Sigmoid colon (tissue), 7 donors: ENCODE measurements at regions of chr5 and their contacts with region 1.

Region 1: GRCh38 chr5:40679914-40680681 is at the start of gene PTGER4:
- DNase-seq: peak; percentile 68
- H3K4me3 ChIP-seq: peak within 1 kb of the TSS; percentile 61 to 84 (median 78)
- H3K27ac ChIP-seq: peak within 1 kb of the TSS; percentile 85 to 93 (median 90)
- H3K4me1 ChIP-seq: peaks cover 0 to 62% (median 28%) of the 10 kb centered on the region in 4 donors
- H3K27me3 ChIP-seq: no peaks in the 10 kb centered on the region
- CTCF ChIP-seq: no peak
- EP300 ChIP-seq: no peak
- POLR2A ChIP-seq: peak; percentile 89 to 93
- total RNA-seq, gene PTGER4: 44.3 to 77.7 (median 72.8) TPM

Region 2: GRCh38 chr5:39948867-39949468 is 731.1 kb before region 1 on chr5:
- intact Hi-C with region 1: loop called (anchors 2 kb)
- DNase-seq: peak; percentile 68
- H3K4me3 ChIP-seq: no peak overlapping the region
- H3K27ac ChIP-seq: no peak overlapping the region
- H3K4me1 ChIP-seq: no peaks in the 10 kb centered on the region
- H3K27me3 ChIP-seq: no peaks in the 10 kb centered on the region
- CTCF ChIP-seq: peak; percentile 27 to 67 (median 44)
- EP300 ChIP-seq: no peak
- POLR2A ChIP-seq: no peak

Region 3: DNA sequence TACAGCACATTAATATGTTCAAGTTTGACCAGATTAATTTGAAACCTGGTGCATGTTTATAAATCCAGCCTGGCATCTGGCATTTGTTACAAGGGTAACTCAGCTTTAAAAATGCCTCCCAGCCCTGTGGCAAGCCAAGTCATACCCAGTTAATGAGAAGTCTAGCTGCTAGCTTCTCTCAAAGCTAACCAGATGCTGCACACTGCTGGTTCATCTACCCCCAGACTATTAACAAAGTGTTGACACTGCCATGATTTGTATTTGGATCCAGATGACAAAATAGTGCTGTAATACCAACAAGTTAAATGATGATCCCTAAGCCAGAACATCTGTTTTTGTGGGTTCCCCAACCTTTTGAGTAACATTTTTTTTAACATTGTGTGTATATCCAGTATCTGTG is 681.6 kb before region 1 on chr5:
- intact Hi-C with region 1: loop called (anchors 2 kb)
- DNase-seq: peak; percentile 86
- H3K4me3 ChIP-seq: no peak overlapping the region
- H3K27ac ChIP-seq: peak overlapping the region in 3 of 4 donors; percentile 57 to 79 (median 68)
- H3K4me1 ChIP-seq: peaks cover 0 to 31% (median 14%) of the 10 kb centered on the region in 4 donors
- H3K27me3 ChIP-seq: no peaks in the 10 kb centered on the region
- CTCF ChIP-seq: no peak
- EP300 ChIP-seq: peak in 3 of 4 donors; percentile 15 to 90 (median 77)
- POLR2A ChIP-seq: no peak

Region 4: DNA sequence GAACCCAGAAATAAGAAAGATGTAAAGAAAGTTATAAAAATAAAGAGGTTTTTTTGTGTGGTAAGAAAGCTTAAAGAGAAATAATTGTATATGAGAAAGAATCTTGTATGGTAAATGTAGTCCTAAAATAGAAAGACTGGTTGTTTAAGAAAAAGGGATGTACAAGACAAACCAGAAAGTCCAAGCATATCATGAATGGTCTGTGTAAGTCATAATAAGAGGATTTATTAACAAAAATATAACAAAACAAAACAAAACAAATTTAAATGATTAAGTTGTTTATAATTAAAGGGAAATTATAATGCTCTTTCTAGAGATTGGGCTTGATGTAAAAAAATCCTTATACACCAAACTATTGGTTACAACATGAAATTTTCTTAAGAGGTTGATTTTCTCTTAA is 590.8 kb before region 1 on chr5:
- intact Hi-C with region 1: loop called (anchors 5 kb)
- DNase-seq: no peak
- H3K4me3 ChIP-seq: no peak overlapping the region
- H3K27ac ChIP-seq: no peak overlapping the region
- H3K4me1 ChIP-seq: peaks cover 0 to 17% (median 8%) of the 10 kb centered on the region in 4 donors
- H3K27me3 ChIP-seq: no peaks in the 10 kb centered on the region
- CTCF ChIP-seq: no peak
- EP300 ChIP-seq: no peak
- POLR2A ChIP-seq: no peak

Region 5: GRCh38 chr5:40477856-40478546 is 202.1 kb before region 1 on chr5:
- intact Hi-C with region 1: loop called (anchors 5 kb)
- DNase-seq: peak; percentile 72
- H3K4me3 ChIP-seq: no peak overlapping the region
- H3K27ac ChIP-seq: peak overlapping the region; percentile 20 to 73 (median 59)
- H3K4me1 ChIP-seq: peaks cover 0 to 19% (median 2%) of the 10 kb centered on the region in 4 donors
- H3K27me3 ChIP-seq: no peaks in the 10 kb centered on the region
- CTCF ChIP-seq: no peak
- EP300 ChIP-seq: peak in 1 of 4 donors; percentile 46
- POLR2A ChIP-seq: no peak

Region 6: GRCh38 chr5:40587284-40587882 is 92.7 kb before region 1 on chr5:
- intact Hi-C with region 1: no loop called
- DNase-seq: no peak
- H3K4me3 ChIP-seq: no peak overlapping the region
- H3K27ac ChIP-seq: no peak overlapping the region
- H3K4me1 ChIP-seq: no peaks in the 10 kb centered on the region
- H3K27me3 ChIP-seq: no peaks in the 10 kb centered on the region
- CTCF ChIP-seq: no peak
- EP300 ChIP-seq: no peak
- POLR2A ChIP-seq: no peak

Region 7: DNA sequence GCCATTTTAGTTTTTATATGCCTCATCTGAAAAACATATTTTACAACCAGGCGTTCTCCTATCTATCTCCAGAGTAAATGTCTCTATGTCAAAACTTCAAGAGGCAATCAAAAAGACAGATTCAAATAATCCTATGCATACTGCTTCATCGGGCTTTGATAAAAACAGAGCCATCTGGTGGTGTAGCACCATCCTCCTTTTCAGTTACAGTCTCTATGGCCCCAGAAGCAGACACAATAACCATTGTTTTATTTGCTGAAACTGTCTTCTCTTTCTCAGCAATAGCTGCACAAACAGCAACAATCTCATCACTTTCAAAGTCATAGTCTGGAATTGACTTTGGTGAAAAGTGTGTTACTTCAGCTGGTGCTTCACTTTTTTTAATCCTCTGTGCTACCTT is 35.9 kb after region 1 on chr5:
- intact Hi-C with region 1: no loop called
- DNase-seq: no peak
- H3K4me3 ChIP-seq: no peak overlapping the region
- H3K27ac ChIP-seq: no peak overlapping the region
- H3K4me1 ChIP-seq: peaks cover 0 to 7% (median 2%) of the 10 kb centered on the region in 4 donors
- H3K27me3 ChIP-seq: no peaks in the 10 kb centered on the region
- CTCF ChIP-seq: no peak
- EP300 ChIP-seq: no peak
- POLR2A ChIP-seq: no peak

Region 8: GRCh38 chr5:40834849-40835787 is 155.0 kb after region 1 on chr5 and contains the start of gene RPL37:
- intact Hi-C with region 1: no loop called
- DNase-seq: peak; percentile 98
- H3K4me3 ChIP-seq: peak within 1 kb of the TSS; percentile 50 to 75 (median 58)
- H3K27ac ChIP-seq: peak within 1 kb of the TSS; percentile 88 to 97 (median 95)
- H3K4me1 ChIP-seq: peaks cover 0 to 34% (median 16%) of the 10 kb centered on the region in 4 donors
- H3K27me3 ChIP-seq: no peaks in the 10 kb centered on the region
- CTCF ChIP-seq: no peak
- EP300 ChIP-seq: peak in 1 of 4 donors; percentile 25
- POLR2A ChIP-seq: peak; percentile 78 to 82
- total RNA-seq, gene RPL37: 120 to 170 (median 149) TPM

Region 9: DNA sequence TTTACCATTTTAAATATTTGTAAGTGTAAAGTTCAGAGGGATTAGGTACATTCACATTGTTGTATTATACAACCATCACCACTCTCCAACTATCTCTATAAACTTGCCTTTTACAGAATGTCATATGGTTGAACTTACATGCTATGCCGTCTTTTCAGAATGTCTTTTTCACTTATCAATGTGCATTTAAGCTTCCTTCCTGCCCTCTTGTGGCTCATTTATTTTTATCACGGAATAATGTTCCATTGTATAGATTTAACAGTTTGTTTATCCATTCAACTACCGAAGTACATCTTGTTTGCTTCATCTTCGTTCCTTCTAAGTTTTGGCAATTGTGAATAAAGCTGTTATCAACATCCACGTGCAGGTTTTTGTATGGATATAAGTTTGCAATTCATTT is 666.5 kb after region 1 on chr5:
- intact Hi-C with region 1: no loop called
- DNase-seq: no peak
- H3K4me3 ChIP-seq: no peak overlapping the region
- H3K27ac ChIP-seq: no peak overlapping the region
- H3K4me1 ChIP-seq: no peaks in the 10 kb centered on the region
- H3K27me3 ChIP-seq: no peaks in the 10 kb centered on the region
- CTCF ChIP-seq: no peak
- EP300 ChIP-seq: no peak
- POLR2A ChIP-seq: no peak